GM10248 (cell line): ENCODE measurements at regions of chrX and their contacts with region 1.

Region 1: DNA sequence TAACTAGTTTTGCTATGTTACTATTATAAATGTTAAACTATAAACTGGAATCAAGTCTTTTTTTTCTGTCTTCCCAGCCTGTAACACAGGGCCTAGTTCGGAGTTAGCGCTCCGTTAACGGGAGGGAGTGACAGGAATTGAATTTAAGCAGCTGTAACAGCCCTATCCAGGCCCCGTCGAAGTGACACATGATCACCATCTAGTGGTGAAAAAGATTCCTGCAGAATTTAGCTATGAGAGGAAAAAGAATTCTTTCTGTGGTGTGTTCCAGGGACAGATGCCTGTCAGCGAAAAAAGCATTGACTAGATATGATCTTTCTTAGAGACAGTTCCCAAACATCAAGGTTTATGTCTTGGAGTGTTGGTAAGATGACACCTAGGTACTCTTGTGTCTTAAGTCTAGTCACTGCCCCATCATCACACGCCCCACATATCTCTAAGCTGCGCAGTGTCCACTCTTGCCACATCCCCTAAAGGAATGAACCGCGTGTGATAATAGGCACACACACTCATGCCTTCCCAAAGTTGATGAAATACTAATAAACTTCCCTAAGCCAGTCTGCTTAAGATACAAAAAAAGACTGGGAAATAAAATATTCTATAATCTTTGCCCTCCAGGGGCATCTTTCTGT is 2.0 kb downstream of the GAB3 start:
- DNase-seq: peak; percentile 44
- CTCF ChIP-seq: peak; percentile 46

Region 2: DNA sequence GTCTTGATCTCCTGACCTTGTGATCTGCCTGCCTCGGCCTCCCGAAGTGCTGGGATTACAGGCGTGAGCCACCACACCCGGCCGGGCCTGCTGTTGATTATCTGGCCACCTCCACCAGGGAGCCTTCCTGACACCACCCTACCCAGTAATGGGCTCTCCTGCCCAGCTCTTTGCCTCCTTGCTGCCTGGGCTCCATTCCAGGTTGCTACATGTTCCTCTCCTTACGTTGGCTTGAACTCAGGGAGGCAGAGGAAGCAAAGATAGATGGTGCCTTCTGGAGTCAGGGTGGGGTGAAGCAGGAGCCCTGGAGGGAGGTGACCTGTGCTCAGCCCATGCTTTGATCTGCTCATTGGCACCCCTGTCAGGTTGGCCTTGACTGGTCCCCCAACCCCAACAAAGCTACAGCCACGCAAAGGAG is 400.7 kb before region 1 on chrX:
- CTCF ChIA-PET with region 1: no interaction called
- POLR2A ChIA-PET with region 1: no interaction called
- DNase-seq: no peak
- CTCF ChIP-seq: no peak

Region 3: GRCh38 chrX:154717824-154718223 is 31.0 kb before region 1 on chrX:
- CTCF ChIA-PET with region 1: interaction called, 25 read pairs
- POLR2A ChIA-PET with region 1: no interaction called
- DNase-seq: no peak
- CTCF ChIP-seq: no peak

Region 4: GRCh38 chrX:154727871-154728270 is 21.0 kb before region 1 on chrX:
- CTCF ChIA-PET with region 1: interaction called, 21 read pairs
- POLR2A ChIA-PET with region 1: no interaction called
- DNase-seq: no peak
- CTCF ChIP-seq: no peak

Region 5: GRCh38 chrX:154734061-154734781 is 14.6 kb before region 1 on chrX:
- CTCF ChIA-PET with region 1: interaction called, 23 read pairs
- POLR2A ChIA-PET with region 1: no interaction called
- DNase-seq: no peak
- CTCF ChIP-seq: no peak

Region 6: GRCh38 chrX:154762523-154763289 is 13.9 kb after region 1 on chrX and contains the start of gene DKC1:
- CTCF ChIA-PET with region 1: interaction called, 24 read pairs
- POLR2A ChIA-PET with region 1: interaction called, 3 read pairs
- DNase-seq: peak; percentile 92
- CTCF ChIP-seq: no peak